ENCODE measurements at regions of chr15 and their contacts with region 1.

Region 1: DNA sequence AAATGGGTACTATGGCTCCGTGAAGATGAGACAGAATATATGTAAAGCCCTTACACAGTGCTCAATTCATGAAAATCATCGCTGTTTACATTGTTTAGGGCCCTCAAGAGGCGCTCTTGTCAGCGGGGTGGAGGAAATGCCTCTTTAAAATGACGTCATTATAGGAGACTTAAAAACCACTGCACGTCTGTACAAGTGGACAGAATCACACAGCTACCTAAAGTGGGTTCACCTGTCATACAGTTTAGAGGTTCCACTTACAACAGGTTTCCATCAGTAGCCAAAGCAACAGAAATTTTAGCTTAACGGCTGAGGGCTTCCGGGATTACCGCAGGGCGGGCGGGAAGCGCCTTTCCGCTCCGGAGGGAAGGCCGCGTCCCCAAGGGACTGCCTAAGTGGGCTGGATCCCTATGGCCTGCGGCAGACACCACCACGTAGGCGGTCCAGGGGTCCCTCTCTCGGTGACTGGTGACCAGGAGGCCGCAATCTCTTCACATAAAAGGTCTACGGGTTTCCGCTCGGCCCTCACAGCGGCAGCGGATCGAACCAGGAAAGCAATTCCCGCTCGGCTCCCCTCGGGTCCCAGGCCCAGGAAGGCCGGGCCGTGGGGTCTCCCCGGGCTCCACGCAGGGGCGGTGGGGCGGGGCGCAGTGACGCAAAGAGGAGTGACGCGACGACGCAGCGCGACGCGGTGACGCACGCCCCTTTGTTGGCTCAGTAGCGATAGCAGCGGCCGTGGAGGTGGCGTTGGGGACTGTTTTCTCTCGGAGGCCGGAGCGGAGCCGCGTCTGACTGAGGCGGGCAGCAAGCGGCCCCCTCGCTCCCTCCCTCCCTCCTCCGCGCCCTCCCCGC is at the start of gene ARIH1:
- DNase-seq: peak; percentile 93 to 98 (median 97)
- ATAC-seq: peak; percentile 91
- H3K4me3 ChIP-seq: peak within 1 kb of the TSS; percentile 95
- H3K4me3 Mint-ChIP-seq: peak within 1 kb of the TSS; percentile 92 to 98 (median 96)
- H3K27ac ChIP-seq: peak within 1 kb of the TSS; percentile 99
- H3K27ac Mint-ChIP-seq: peak within 1 kb of the TSS; percentile 87 to 100 (median 99)
- H3K4me1 ChIP-seq: peaks cover 38 to 39% of the 10 kb centered on the region in 2 donors
- H3K4me1 Mint-ChIP-seq: peaks cover 35 to 59% (median 47%) of the 10 kb centered on the region in 7 donors
- H3K27me3 ChIP-seq: no peaks in the 10 kb centered on the region
- H3K27me3 Mint-ChIP-seq: no peaks in the 10 kb centered on the region
- total RNA-seq, gene ARIH1: 128 to 191 (median 181) TPM

Region 2: DNA sequence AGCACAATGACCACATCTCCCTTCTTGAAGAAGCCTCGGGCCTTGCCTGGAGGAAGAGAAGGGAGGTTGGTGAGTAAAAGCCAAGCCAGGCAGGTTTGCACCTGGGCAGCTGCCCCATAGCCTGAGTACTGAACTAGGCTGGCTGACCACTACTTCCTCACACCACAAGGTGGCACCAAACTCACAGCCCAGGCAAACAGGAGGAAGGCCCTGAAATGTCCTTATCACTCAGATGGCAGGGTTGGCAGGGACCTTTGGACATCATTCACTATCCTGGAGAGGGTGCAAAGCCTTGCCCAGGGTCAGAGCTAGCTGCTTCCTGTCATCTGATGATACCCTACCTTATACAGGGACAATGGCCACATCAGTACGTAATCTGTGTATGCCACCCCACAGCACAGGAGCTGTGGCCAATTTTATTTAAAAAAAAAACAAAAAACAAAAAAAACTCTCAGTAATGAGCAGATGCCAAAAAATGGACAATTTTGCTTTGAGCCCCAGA is 274.1 kb before region 1 on chr15:
- CTCF ChIA-PET with region 1: no interaction called
- POLR2A ChIA-PET with region 1: interaction called, 3 read pairs
- intact Hi-C with region 1: loop called in 1 of 2 experiments (anchors 1 kb)
- DNase-seq: peak; percentile 54 to 76 (median 67)
- ATAC-seq: peak; percentile 83
- H3K4me3 ChIP-seq: no peak overlapping the region
- H3K4me3 Mint-ChIP-seq: no peak overlapping the region
- H3K27ac ChIP-seq: no peak overlapping the region
- H3K27ac Mint-ChIP-seq: peak overlapping the region in 1 of 9 donors; percentile 56
- H3K4me1 ChIP-seq: no peaks in the 10 kb centered on the region
- H3K4me1 Mint-ChIP-seq: peaks cover 4 to 31% (median 8%) of the 10 kb centered on the region in 7 donors
- H3K27me3 ChIP-seq: no peaks in the 10 kb centered on the region
- H3K27me3 Mint-ChIP-seq: peaks cover 13 to 22% (median 19%) of the 10 kb centered on the region in 5 donors

Region 3: DNA sequence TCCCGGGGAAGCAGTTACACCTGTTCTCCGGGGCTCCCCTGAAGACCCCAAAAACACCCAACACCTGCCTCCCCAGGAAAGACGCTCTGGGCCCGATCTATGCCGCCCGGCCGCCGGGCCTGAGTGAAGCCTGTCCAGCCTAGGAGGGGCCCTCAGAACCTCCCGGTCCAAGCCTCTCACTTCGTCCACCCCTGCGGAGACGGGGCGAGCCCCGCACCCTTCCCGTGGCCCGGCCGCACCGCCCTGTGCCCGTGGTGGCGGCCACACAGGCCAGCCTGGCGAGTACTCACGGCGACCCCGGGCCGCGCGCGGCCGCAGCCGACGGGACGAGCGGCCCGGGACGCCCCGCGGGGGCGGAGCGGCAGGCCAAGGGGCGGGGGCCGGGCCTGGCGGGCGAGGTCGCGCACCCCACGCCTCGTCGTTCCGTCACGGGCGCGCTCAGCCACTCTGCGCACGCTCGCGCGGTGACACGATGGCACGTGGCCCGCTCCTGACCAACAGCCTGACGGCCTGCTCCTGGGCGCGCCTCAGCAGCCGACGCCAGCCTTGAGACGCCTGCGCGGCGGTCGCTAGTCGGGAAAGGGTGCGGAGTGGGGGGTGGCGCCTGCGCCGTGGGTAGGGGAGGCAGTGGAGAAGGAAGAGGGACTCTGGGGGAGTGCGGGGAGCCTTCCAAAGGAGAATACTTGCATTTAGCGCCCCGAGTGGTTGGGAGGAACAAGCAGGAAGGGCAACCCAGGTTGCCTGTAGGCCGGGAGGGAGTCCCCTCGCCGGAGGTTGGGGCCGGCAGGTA is 201.4 kb before region 1 on chr15 and contains the start of gene PARP6:
- CTCF ChIA-PET with region 1: no interaction called
- POLR2A ChIA-PET with region 1: interaction called, 4 read pairs
- intact Hi-C with region 1: loop called (anchors 1 kb)
- DNase-seq: peak; percentile 94 to 100 (median 99)
- ATAC-seq: peak; percentile 96
- H3K4me3 ChIP-seq: peak within 1 kb of the TSS; percentile 71
- H3K4me3 Mint-ChIP-seq: peak within 1 kb of the TSS; percentile 87 to 95 (median 90)
- H3K27ac ChIP-seq: peak within 1 kb of the TSS; percentile 90
- H3K27ac Mint-ChIP-seq: peak within 1 kb of the TSS; percentile 87 to 96 (median 93)
- H3K4me1 ChIP-seq: peaks cover 18 to 25% of the 10 kb centered on the region in 2 donors
- H3K4me1 Mint-ChIP-seq: peaks cover 24 to 53% (median 44%) of the 10 kb centered on the region in 7 donors
- H3K27me3 ChIP-seq: no peaks in the 10 kb centered on the region
- H3K27me3 Mint-ChIP-seq: no peaks in the 10 kb centered on the region
- total RNA-seq, gene PARP6: 75.8 to 129 (median 127) TPM

Region 4: GRCh38 chr15:72375847-72376581 is 97.8 kb before region 1 on chr15 and contains the start of gene HEXA:
- CTCF ChIA-PET with region 1: interaction called, 3 read pairs
- POLR2A ChIA-PET with region 1: interaction called, 58 read pairs
- intact Hi-C with region 1: loop called (anchors 1 kb)
- DNase-seq: peak; percentile 91 to 99 (median 95)
- ATAC-seq: peak; percentile 93
- H3K4me3 ChIP-seq: peak within 1 kb of the TSS; percentile 99
- H3K4me3 Mint-ChIP-seq: peak within 1 kb of the TSS; percentile 87 to 96 (median 93)
- H3K27ac ChIP-seq: peak within 1 kb of the TSS; percentile 75
- H3K27ac Mint-ChIP-seq: peak within 1 kb of the TSS; percentile 94 to 100 (median 96)
- H3K4me1 ChIP-seq: peaks cover 21 to 39% of the 10 kb centered on the region in 2 donors
- H3K4me1 Mint-ChIP-seq: peaks cover 39 to 85% (median 64%) of the 10 kb centered on the region in 7 donors
- H3K27me3 ChIP-seq: no peaks in the 10 kb centered on the region
- H3K27me3 Mint-ChIP-seq: no peaks in the 10 kb centered on the region
- total RNA-seq, gene HEXA: 83.1 to 101 (median 94.8) TPM

Region 5: DNA sequence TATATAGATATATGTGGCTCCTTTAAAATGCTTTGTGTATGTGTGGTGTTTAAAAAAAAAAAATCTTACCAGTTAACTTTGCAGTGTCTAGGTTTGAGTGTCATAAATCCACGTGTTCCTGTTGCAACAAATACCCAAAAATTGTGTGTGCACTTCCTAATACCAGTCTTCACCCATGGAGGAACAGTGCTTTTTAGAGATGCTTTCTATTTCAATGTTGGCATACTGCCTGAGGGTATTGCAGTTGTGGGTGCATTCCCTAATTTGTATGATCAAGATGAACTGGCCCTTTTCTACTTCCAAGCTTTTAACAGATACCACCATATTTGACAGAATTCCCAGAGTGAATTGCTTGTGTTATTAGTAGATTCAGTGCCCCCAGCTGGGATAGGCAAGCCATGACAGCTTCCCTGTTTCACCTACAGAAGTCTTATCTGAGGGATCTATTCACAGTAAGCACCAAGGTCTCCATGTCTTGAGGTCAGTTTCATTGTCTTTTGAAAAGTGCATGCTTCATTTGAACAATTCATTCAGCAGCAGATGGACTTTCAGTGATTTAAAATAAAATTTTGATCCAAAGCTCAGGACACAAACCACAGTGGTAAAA is 111.7 kb after region 1 on chr15:
- CTCF ChIA-PET with region 1: no interaction called
- POLR2A ChIA-PET with region 1: no interaction called
- intact Hi-C with region 1: loop called in 1 of 2 experiments (anchors 5 kb)
- DNase-seq: no peak
- ATAC-seq: no peak
- H3K4me3 ChIP-seq: no peak overlapping the region
- H3K4me3 Mint-ChIP-seq: no peak overlapping the region
- H3K27ac ChIP-seq: no peak overlapping the region
- H3K27ac Mint-ChIP-seq: peak overlapping the region in 4 of 9 donors; percentile 3 to 66 (median 15)
- H3K4me1 ChIP-seq: no peaks in the 10 kb centered on the region
- H3K4me1 Mint-ChIP-seq: peaks cover 0 to 18% (median 4%) of the 10 kb centered on the region in 7 donors
- H3K27me3 ChIP-seq: no peaks in the 10 kb centered on the region
- H3K27me3 Mint-ChIP-seq: no peaks in the 10 kb centered on the region

Region 6: GRCh38 chr15:73051811-73052678 is 578.2 kb after region 1 on chr15 and contains the start of gene NEO1:
- CTCF ChIA-PET with region 1: no interaction called
- POLR2A ChIA-PET with region 1: no interaction called
- intact Hi-C with region 1: loop called in 1 of 2 experiments (anchors 10 kb)
- DNase-seq: peak; percentile 71 to 86 (median 84)
- ATAC-seq: peak; percentile 90
- H3K4me3 ChIP-seq: peak within 1 kb of the TSS; percentile 74
- H3K4me3 Mint-ChIP-seq: peak within 1 kb of the TSS; percentile 81 to 95 (median 88)
- H3K27ac ChIP-seq: peak within 1 kb of the TSS; percentile 74
- H3K27ac Mint-ChIP-seq: peak within 1 kb of the TSS; percentile 36 to 88 (median 62)
- H3K4me1 ChIP-seq: peaks cover 8 to 11% of the 10 kb centered on the region in 2 donors
- H3K4me1 Mint-ChIP-seq: peaks cover 4 to 14% (median 11%) of the 10 kb centered on the region in 7 donors
- H3K27me3 ChIP-seq: no peaks in the 10 kb centered on the region
- H3K27me3 Mint-ChIP-seq: peaks cover 0 to 37% (median 0%) of the 10 kb centered on the region in 5 donors
- total RNA-seq, gene NEO1: 4.4 to 9.5 (median 6.9) TPM

Measured in naive thymus-derived CD4-positive, alpha-beta T cell (primary cell).